Naive thymus-derived CD4-positive, alpha-beta T cell (primary cell): ENCODE measurements at regions of chr12 and their contacts with region 1.

Region 1: GRCh38 chr12:112012775-112013600 is at the starts of genes ERP29 and TMEM116:
- DNase-seq: peak; percentile 98 to 100 (median 99)
- ATAC-seq: peak; percentile 92
- H3K4me3 ChIP-seq: peak within 1 kb of the TSS; percentile 90
- H3K4me3 Mint-ChIP-seq: peak within 1 kb of the TSS; percentile 86 to 97 (median 91)
- H3K27ac ChIP-seq: peak within 1 kb of the TSS; percentile 96
- H3K27ac Mint-ChIP-seq: peak within 1 kb of the TSS; percentile 95 to 99 (median 97)
- H3K4me1 ChIP-seq: peaks cover 29 to 32% of the 10 kb centered on the region in 2 donors
- H3K4me1 Mint-ChIP-seq: peaks cover 41 to 67% (median 51%) of the 10 kb centered on the region in 7 donors
- H3K27me3 ChIP-seq: no peaks in the 10 kb centered on the region
- H3K27me3 Mint-ChIP-seq: no peaks in the 10 kb centered on the region
- total RNA-seq, gene ERP29: 115 to 184 (median 127) TPM
- total RNA-seq, gene TMEM116: 12.6 to 29.3 (median 23.0) TPM

Region 2: GRCh38 chr12:111685744-111686517 is 327.1 kb before region 1 on chr12 and contains the starts of genes ACAD10 and BRAP:
- CTCF ChIA-PET with region 1: no interaction called
- POLR2A ChIA-PET with region 1: no interaction called
- intact Hi-C with region 1: loop called in 1 of 2 experiments (anchors 10 kb)
- DNase-seq: peak; percentile 82 to 98 (median 93)
- ATAC-seq: peak; percentile 96
- H3K4me3 ChIP-seq: peak within 1 kb of the TSS; percentile 90
- H3K4me3 Mint-ChIP-seq: peak within 1 kb of the TSS; percentile 90 to 98 (median 96)
- H3K27ac ChIP-seq: peak within 1 kb of the TSS; percentile 83
- H3K27ac Mint-ChIP-seq: peak within 1 kb of the TSS; percentile 90 to 98 (median 96)
- H3K4me1 ChIP-seq: peaks cover 17 to 18% of the 10 kb centered on the region in 2 donors
- H3K4me1 Mint-ChIP-seq: peaks cover 23 to 54% (median 44%) of the 10 kb centered on the region in 7 donors
- H3K27me3 ChIP-seq: no peaks in the 10 kb centered on the region
- H3K27me3 Mint-ChIP-seq: peaks cover 0 to 2% (median 0%) of the 10 kb centered on the region in 5 donors
- total RNA-seq, gene ACAD10: 28.4 to 65.3 (median 36.0) TPM
- total RNA-seq, gene BRAP: 19.5 to 25.5 (median 23.0) TPM

Region 3: DNA sequence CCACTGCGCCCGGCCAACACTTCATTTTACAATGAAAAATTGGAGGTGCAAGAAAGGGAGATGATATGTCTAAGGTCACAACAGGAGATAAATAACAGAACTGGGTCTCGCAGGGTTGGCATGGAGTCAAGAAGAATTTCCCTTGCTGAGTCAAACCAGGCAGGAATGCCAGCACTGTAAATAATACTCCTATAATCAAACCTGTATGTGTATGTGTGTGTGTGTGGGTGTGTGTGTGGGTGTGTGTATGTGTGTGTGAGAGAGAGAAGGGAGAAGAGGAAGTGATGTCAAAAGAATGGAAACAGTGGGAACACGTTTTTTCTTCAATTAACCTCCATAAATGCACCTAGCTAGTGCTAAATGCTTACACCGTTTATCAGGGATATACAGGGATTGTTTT is 70.4 kb before region 1 on chr12:
- CTCF ChIA-PET with region 1: interaction called, 63 read pairs
- POLR2A ChIA-PET with region 1: interaction called, 57 read pairs
- intact Hi-C with region 1: loop called (anchors 1 kb)
- DNase-seq: no peak
- ATAC-seq: no peak
- H3K4me3 ChIP-seq: no peak overlapping the region
- H3K4me3 Mint-ChIP-seq: no peak overlapping the region
- H3K27ac ChIP-seq: no peak overlapping the region
- H3K27ac Mint-ChIP-seq: no peak overlapping the region
- H3K4me1 ChIP-seq: peaks cover 0 to 3% of the 10 kb centered on the region in 2 donors
- H3K4me1 Mint-ChIP-seq: peaks cover 0 to 25% (median 12%) of the 10 kb centered on the region in 7 donors
- H3K27me3 ChIP-seq: no peaks in the 10 kb centered on the region
- H3K27me3 Mint-ChIP-seq: no peaks in the 10 kb centered on the region

Region 4: GRCh38 chr12:111981987-111982386 is 31.0 kb before region 1 on chr12:
- CTCF ChIA-PET with region 1: interaction called, 4 read pairs
- POLR2A ChIA-PET with region 1: interaction called, 21 read pairs
- intact Hi-C with region 1: loop called in 1 of 2 experiments (anchors 5 kb)
- DNase-seq: no peak
- ATAC-seq: no peak
- H3K4me3 ChIP-seq: no peak overlapping the region
- H3K4me3 Mint-ChIP-seq: no peak overlapping the region
- H3K27ac ChIP-seq: no peak overlapping the region
- H3K27ac Mint-ChIP-seq: peak overlapping the region in 1 of 9 donors; percentile 19
- H3K4me1 ChIP-seq: no peaks in the 10 kb centered on the region
- H3K4me1 Mint-ChIP-seq: peaks cover 0 to 43% (median 22%) of the 10 kb centered on the region in 7 donors
- H3K27me3 ChIP-seq: no peaks in the 10 kb centered on the region
- H3K27me3 Mint-ChIP-seq: no peaks in the 10 kb centered on the region

Region 5: DNA sequence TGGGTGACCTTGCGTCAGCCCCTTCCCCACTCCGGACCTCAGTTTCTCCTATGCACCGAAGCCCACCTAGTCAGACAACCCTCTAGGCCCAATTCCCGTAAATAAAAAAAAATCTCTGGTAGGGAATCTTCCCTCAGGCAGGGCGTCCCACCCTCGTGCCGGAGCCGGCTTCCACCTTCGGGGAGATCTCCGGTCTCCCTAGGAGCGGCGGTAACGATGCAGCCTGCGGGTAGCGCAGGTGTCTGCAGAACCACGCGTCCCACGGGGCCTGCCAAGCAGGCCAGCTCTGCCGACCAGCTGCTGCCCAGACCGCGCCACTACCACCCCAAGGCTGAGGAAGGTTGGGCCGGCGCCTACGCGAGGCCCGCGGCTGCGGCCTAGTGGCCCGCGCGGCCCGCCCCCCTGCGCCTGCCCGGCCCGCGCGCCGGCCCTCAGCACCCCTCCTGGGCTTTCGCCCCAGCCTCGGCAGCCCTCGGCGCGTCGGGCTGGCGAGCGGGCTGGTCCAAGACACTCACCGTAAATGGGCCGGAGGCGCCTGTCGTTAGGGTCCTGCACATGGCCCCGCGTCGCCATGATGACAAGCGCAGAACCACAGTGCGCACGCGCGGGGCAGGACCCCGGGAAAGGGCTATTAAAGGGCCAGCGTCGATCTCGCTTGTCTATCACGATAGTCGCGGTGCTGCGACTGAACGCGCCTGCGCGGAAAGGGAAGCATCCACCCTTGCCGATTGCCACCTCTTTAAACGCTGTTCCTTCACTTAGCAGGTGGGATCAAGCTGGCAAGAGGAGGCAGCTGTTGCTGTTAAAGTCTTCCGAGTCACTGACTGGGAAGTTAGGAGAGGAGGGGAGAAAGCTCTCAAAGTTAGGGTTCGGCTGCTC is 95.5 kb after region 1 on chr12 and contains the start of gene NAA25:
- CTCF ChIA-PET with region 1: interaction called, 8 read pairs
- POLR2A ChIA-PET with region 1: interaction called, 8 read pairs
- intact Hi-C with region 1: loop called (anchors 1 to 5 kb)
- DNase-seq: peak; percentile 79 to 90 (median 86)
- ATAC-seq: peak; percentile 92
- H3K4me3 ChIP-seq: peak within 1 kb of the TSS; percentile 100
- H3K4me3 Mint-ChIP-seq: peak within 1 kb of the TSS; percentile 96 to 99 (median 98)
- H3K27ac ChIP-seq: peak within 1 kb of the TSS; percentile 92
- H3K27ac Mint-ChIP-seq: peak within 1 kb of the TSS; percentile 93 to 98 (median 97)
- H3K4me1 ChIP-seq: peaks cover 12 to 22% of the 10 kb centered on the region in 2 donors
- H3K4me1 Mint-ChIP-seq: peaks cover 27 to 53% (median 45%) of the 10 kb centered on the region in 7 donors
- H3K27me3 ChIP-seq: no peaks in the 10 kb centered on the region
- H3K27me3 Mint-ChIP-seq: no peaks in the 10 kb centered on the region
- total RNA-seq, gene NAA25: 39.1 to 43.0 (median 42.1) TPM

Region 6: DNA sequence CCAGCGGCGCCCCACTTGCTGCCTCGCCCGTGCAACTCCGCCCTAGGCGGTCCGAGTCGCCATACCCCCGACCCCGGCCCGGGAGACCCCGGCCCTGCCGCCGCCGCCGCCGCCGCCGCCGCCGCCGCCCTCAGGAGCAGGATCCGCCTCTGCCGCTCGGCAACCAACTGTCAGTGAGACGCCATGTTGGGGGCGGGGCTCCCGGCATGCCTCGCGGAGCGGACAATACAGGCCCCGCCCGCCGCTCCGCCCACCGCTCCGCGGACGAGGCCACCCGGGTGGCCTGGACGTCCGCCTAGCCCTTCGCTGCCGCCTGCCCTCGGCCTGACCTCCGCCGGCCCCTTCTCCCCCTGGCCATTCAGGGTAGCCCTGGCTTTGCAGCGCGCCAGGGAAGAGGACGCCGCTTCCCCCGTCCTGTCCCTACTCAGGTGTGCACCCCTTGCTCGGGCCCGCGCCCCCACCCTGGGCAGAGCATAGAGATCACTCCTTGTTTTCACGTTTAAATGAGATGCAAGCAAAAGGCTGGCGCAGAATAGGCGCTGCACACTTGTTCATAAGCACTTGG is 369.3 kb after region 1 on chr12 and contains the start of gene HECTD4:
- CTCF ChIA-PET with region 1: no interaction called
- POLR2A ChIA-PET with region 1: no interaction called
- intact Hi-C with region 1: loop called (anchors 1 kb)
- DNase-seq: peak; percentile 83 to 97 (median 88)
- ATAC-seq: peak; percentile 100
- H3K4me3 ChIP-seq: peak within 1 kb of the TSS; percentile 81
- H3K4me3 Mint-ChIP-seq: peak within 1 kb of the TSS; percentile 92 to 99 (median 95)
- H3K27ac ChIP-seq: peak within 1 kb of the TSS; percentile 76
- H3K27ac Mint-ChIP-seq: peak within 1 kb of the TSS; percentile 81 to 96 (median 91)
- H3K4me1 ChIP-seq: peaks cover 6 to 15% of the 10 kb centered on the region in 2 donors
- H3K4me1 Mint-ChIP-seq: peaks cover 11 to 32% (median 28%) of the 10 kb centered on the region in 7 donors
- H3K27me3 ChIP-seq: no peaks in the 10 kb centered on the region
- H3K27me3 Mint-ChIP-seq: peaks cover 0 to 2% (median under 1%) of the 10 kb centered on the region in 5 donors
- total RNA-seq, gene HECTD4: 44.9 to 57.7 (median 51.4) TPM

Region 7: DNA sequence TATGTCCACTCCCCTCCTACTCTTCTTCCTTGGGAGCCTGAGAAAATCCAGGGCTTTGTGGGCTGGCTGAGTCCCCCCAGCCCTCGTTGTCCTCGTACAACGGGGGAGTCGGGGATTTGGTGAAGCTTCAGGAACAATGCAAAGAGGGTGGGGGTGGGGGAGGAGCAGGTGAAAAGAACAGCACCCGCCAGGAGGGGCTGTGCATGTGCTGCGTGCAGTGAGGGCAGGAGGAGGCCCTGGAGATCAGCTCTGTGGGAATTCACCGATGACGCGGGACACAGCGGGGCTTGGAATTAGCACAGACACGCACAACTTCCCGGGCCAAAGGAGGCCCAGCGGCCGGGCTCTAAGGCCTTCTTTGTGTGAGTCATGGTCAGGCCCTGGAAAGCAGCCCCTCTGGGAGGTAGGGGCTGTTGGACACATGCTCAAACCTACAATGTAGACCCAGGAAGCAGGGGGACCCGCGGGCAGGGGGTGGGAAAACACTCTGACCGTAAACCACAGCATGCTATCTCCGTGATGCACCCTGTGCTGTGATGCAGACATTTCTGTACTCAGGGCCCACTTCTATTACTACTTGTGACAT is 1920.3 kb after region 1 on chr12:
- CTCF ChIA-PET with region 1: no interaction called
- POLR2A ChIA-PET with region 1: no interaction called
- intact Hi-C with region 1: no loop called
- DNase-seq: no peak
- ATAC-seq: no peak
- H3K4me3 ChIP-seq: no peak overlapping the region
- H3K4me3 Mint-ChIP-seq: no peak overlapping the region
- H3K27ac ChIP-seq: no peak overlapping the region
- H3K27ac Mint-ChIP-seq: peak overlapping the region in 1 of 9 donors; percentile 21
- H3K4me1 ChIP-seq: no peaks in the 10 kb centered on the region
- H3K4me1 Mint-ChIP-seq: peaks cover 0 to 18% (median 9%) of the 10 kb centered on the region in 7 donors
- H3K27me3 ChIP-seq: no peaks in the 10 kb centered on the region
- H3K27me3 Mint-ChIP-seq: no peaks in the 10 kb centered on the region